WTC11 (cell line): ENCODE measurements at regions of chr2 and their contacts with region 1.

Region 1: DNA sequence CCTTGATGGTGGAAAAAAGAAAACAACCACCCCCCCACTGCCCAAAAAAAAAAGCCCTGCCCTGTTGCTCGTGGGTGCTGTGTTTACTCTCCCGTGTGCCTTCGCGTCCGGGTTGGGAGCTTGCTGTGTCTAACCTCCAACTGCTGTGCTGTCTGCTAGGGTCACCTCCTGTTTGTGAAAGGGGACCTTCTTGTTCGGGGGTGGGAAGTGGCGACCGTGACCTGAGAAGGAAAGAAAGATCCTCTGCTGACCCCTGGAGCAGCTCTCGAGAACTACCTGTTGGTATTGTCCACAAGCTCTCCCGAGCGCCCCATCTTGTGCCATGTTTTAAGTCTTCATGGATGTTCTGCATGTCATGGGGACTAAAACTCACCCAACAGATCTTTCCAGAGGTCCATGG is 28.0 kb downstream of the MAL start:
- DNase-seq: peak; percentile 63
- ATAC-seq: peak; percentile 86
- H3K4me3 Mint-ChIP-seq: no peak overlapping the region
- H3K27ac Mint-ChIP-seq: no peak overlapping the region
- H3K4me1 Mint-ChIP-seq: peaks cover 5% of the 10 kb centered on the region
- H3K27me3 Mint-ChIP-seq: peaks cover 4% of the 10 kb centered on the region
- CTCF ChIP-seq: no peak

Region 2: GRCh38 chr2:94956797-94957391 is 96.6 kb before region 1 on chr2:
- CTCF ChIA-PET with region 1: interaction called, 34 read pairs
- POLR2A ChIA-PET with region 1: no interaction called
- DNase-seq: peak; percentile 54
- ATAC-seq: peak; percentile 74
- H3K4me3 Mint-ChIP-seq: no peak overlapping the region
- H3K27ac Mint-ChIP-seq: no peak overlapping the region
- H3K4me1 Mint-ChIP-seq: peaks cover 15% of the 10 kb centered on the region
- H3K27me3 Mint-ChIP-seq: peaks cover 4% of the 10 kb centered on the region; the same call in 1 of the 2 replicates
- CTCF ChIP-seq: peak; percentile 80

Region 3: GRCh38 chr2:95002498-95002897 is 51.0 kb before region 1 on chr2:
- CTCF ChIA-PET with region 1: interaction called, 11 read pairs
- POLR2A ChIA-PET with region 1: no interaction called
- DNase-seq: peak; percentile 2
- ATAC-seq: no peak
- H3K4me3 Mint-ChIP-seq: no peak overlapping the region
- H3K27ac Mint-ChIP-seq: no peak overlapping the region
- H3K4me1 Mint-ChIP-seq: peaks cover 14% of the 10 kb centered on the region
- H3K27me3 Mint-ChIP-seq: peaks cover 12% of the 10 kb centered on the region
- CTCF ChIP-seq: no peak

Region 4: DNA sequence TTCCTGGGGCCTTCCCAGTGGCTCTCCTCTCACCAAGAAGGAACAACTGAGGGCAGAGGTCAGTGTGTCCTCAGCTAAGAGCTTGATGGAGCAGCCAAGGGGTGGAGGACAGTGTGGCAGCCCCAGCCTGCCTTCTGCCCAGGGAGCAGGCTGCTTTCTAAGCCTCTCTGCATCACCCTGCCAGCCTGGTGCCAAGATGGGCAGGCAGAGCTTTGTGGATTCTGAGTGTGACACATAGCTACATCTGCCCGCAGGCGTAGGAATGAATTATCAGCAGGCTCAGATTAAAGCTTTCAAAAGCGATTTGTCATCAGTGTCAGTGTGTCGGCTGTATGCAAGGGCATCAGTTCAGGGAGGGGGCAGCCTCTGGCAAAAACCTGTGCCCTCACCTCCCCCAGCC is 19.3 kb before region 1 on chr2:
- CTCF ChIA-PET with region 1: interaction called, 10 read pairs
- POLR2A ChIA-PET with region 1: no interaction called
- DNase-seq: no peak
- ATAC-seq: no peak
- H3K4me3 Mint-ChIP-seq: no peak overlapping the region
- H3K27ac Mint-ChIP-seq: no peak overlapping the region
- H3K4me1 Mint-ChIP-seq: no peaks in the 10 kb centered on the region
- H3K27me3 Mint-ChIP-seq: peaks cover 20% of the 10 kb centered on the region
- CTCF ChIP-seq: no peak

Region 5: DNA sequence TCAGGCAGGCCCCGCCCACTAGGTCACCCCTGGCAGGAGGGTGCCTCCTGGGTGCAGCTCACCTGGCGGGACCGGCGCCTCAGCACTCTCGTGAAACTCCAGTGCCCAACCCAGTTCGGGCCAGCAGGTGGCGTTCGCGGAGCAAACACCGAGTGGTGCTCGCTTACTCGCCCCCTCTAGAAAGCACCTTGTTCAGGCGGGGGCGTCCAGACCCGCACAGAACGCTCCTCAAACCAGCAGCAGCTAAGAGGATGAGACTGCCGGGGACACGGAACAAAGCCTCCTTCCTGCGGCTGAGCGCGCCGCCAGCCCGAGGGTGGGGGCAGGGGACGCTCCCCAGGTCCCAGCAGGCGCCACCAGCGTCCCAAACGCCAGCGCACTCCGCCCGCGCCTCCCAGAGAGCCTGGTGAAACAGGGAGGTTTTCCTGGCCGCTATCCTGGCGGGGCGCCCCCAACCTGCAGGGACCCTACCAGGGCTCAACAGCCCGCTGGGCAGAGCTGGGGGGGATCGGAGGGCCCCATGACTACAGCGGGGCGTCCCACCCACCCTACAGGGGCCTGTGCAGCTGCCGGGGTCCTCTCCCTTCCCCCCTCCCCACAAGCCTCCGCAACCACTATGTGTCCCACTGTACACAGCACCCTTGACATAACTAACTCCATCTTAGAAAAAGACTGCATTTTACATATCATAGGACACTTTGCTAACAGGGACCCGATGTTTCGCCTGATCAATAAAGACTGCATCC is 23.4 kb after region 1 on chr2:
- CTCF ChIA-PET with region 1: interaction called, 32 read pairs
- POLR2A ChIA-PET with region 1: no interaction called
- DNase-seq: peak; percentile 92
- ATAC-seq: peak; percentile 87
- H3K4me3 Mint-ChIP-seq: peak overlapping the region; percentile 65
- H3K27ac Mint-ChIP-seq: no peak overlapping the region
- H3K4me1 Mint-ChIP-seq: peaks cover 24% of the 10 kb centered on the region
- H3K27me3 Mint-ChIP-seq: peaks cover 6% of the 10 kb centered on the region
- CTCF ChIP-seq: peak; percentile 78

Region 6: DNA sequence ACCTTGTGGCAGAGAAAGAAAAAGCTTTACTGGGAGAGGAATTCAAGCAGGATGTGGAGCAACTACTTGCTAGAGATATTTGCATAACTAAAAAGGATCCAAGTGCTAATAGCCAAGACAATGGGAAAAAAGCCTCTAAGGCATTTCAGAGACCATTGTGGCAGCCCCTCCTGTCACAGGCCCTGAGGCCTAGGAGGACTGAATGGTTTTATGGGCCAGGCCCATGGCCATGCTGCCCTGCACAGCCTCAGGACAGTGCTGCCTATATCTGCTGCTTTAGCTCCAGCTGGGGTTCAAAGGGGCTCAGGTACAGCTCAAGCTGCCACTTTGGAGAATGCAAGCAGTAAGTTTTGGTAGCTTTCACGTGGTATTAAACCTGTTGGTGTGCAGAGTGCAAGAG is 85.2 kb after region 1 on chr2:
- CTCF ChIA-PET with region 1: no interaction called
- POLR2A ChIA-PET with region 1: no interaction called
- DNase-seq: no peak
- ATAC-seq: no peak
- H3K4me3 Mint-ChIP-seq: no peak overlapping the region
- H3K27ac Mint-ChIP-seq: no peak overlapping the region
- H3K4me1 Mint-ChIP-seq: no peaks in the 10 kb centered on the region
- H3K27me3 Mint-ChIP-seq: peaks cover 15% of the 10 kb centered on the region
- CTCF ChIP-seq: no peak